Activated CD4-positive, alpha-beta T cell treated with anti-CD3 and anti-CD28 coated beads for 36 hours (primary cell): ENCODE measurements at regions of chr7 and their contacts with region 1.

Region 1: GRCh38 chr7:23273141-23273599 is 26.0 kb upstream of the MALSU1 start:
- DNase-seq: peak; percentile 96
- ATAC-seq: peak; percentile 97
- H3K4me3 Mint-ChIP-seq: peak overlapping the region; percentile 59
- H3K27ac Mint-ChIP-seq: peak overlapping the region; percentile 58
- H3K4me1 Mint-ChIP-seq: peaks cover 8% of the 10 kb centered on the region
- H3K27me3 Mint-ChIP-seq: peaks cover 4% of the 10 kb centered on the region

Region 2: DNA sequence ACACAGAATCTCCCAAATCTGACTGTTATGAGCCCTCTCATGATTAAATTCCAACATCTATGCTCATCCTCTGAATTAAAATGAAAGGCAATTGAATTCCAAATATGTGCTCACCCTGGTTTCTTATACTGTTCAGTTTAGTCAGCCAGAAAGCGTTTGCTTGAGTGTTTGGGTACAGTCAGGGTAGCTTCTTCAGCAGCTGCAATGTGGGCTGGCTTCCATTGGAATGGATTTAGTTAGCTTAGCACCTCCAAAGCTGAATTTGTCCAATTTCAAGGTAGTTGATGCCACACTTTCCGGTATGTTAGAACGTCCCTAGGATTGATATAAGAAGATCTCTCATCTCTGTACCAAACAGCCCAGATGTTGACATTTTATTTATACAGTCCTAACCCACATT is 158.3 kb before region 1 on chr7:
- CTCF ChIA-PET with region 1: no interaction called
- POLR2A ChIA-PET with region 1: no interaction called
- intact Hi-C with region 1: no loop called
- DNase-seq: no peak
- ATAC-seq: no peak
- H3K4me3 Mint-ChIP-seq: no peak overlapping the region
- H3K27ac Mint-ChIP-seq: no peak overlapping the region
- H3K4me1 Mint-ChIP-seq: peaks cover 10% of the 10 kb centered on the region
- H3K27me3 Mint-ChIP-seq: no peaks in the 10 kb centered on the region

Region 3: GRCh38 chr7:23285657-23286646 is 12.8 kb after region 1 on chr7:
- CTCF ChIA-PET with region 1: interaction called, 30 read pairs
- POLR2A ChIA-PET with region 1: no interaction called
- intact Hi-C with region 1: no loop called
- DNase-seq: no peak
- ATAC-seq: no peak
- H3K4me3 Mint-ChIP-seq: no peak overlapping the region
- H3K27ac Mint-ChIP-seq: no peak overlapping the region
- H3K4me1 Mint-ChIP-seq: peaks cover 13% of the 10 kb centered on the region
- H3K27me3 Mint-ChIP-seq: no peaks in the 10 kb centered on the region

Region 4: GRCh38 chr7:23357190-23358093 is 84.3 kb after region 1 on chr7:
- CTCF ChIA-PET with region 1: interaction called, 17 read pairs
- POLR2A ChIA-PET with region 1: no interaction called
- intact Hi-C with region 1: loop called (anchors 1 to 2 kb)
- DNase-seq: no peak
- ATAC-seq: peak; percentile 42
- H3K4me3 Mint-ChIP-seq: no peak overlapping the region
- H3K27ac Mint-ChIP-seq: no peak overlapping the region
- H3K4me1 Mint-ChIP-seq: peaks cover 18% of the 10 kb centered on the region
- H3K27me3 Mint-ChIP-seq: peaks cover 7% of the 10 kb centered on the region

Region 5: DNA sequence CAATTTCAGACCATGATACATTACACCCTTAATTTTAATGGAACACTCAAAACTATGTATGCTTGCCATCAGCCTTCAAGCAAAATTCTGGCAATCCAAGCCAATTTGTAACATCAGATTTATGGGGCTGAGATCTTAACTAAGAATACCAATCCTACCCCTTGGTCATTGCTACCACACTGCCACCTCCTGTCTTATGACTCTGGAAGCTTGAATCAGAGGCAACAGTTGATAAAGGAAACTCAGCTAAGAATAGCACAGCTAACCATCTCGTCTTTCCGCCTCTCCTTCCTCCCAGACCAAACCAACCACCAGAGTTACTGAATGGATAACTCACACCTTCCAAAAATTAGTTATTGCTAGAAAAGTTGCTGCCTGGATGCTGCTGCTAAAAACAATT is 189.7 kb after region 1 on chr7:
- CTCF ChIA-PET with region 1: interaction called, 11 read pairs
- POLR2A ChIA-PET with region 1: no interaction called
- intact Hi-C with region 1: loop called (anchors 1 to 2 kb)
- DNase-seq: peak; percentile 36
- ATAC-seq: peak; percentile 61
- H3K4me3 Mint-ChIP-seq: no peak overlapping the region
- H3K27ac Mint-ChIP-seq: no peak overlapping the region
- H3K4me1 Mint-ChIP-seq: peaks cover 5% of the 10 kb centered on the region
- H3K27me3 Mint-ChIP-seq: peaks cover 61% of the 10 kb centered on the region

Region 6: GRCh38 chr7:23539494-23539907 is 266.3 kb after region 1 on chr7:
- CTCF ChIA-PET with region 1: interaction called, 54 read pairs
- POLR2A ChIA-PET with region 1: interaction called, 5 read pairs
- intact Hi-C with region 1: loop called (anchors 5 kb)
- DNase-seq: no peak
- ATAC-seq: peak; percentile 34
- H3K4me3 Mint-ChIP-seq: peak overlapping the region; percentile 1
- H3K27ac Mint-ChIP-seq: peak overlapping the region; percentile 69
- H3K4me1 Mint-ChIP-seq: peaks cover 16% of the 10 kb centered on the region
- H3K27me3 Mint-ChIP-seq: no peaks in the 10 kb centered on the region